KBM-7 (cell line): ENCODE measurements at regions of chr1 and their contacts with region 1.

Region 1: DNA sequence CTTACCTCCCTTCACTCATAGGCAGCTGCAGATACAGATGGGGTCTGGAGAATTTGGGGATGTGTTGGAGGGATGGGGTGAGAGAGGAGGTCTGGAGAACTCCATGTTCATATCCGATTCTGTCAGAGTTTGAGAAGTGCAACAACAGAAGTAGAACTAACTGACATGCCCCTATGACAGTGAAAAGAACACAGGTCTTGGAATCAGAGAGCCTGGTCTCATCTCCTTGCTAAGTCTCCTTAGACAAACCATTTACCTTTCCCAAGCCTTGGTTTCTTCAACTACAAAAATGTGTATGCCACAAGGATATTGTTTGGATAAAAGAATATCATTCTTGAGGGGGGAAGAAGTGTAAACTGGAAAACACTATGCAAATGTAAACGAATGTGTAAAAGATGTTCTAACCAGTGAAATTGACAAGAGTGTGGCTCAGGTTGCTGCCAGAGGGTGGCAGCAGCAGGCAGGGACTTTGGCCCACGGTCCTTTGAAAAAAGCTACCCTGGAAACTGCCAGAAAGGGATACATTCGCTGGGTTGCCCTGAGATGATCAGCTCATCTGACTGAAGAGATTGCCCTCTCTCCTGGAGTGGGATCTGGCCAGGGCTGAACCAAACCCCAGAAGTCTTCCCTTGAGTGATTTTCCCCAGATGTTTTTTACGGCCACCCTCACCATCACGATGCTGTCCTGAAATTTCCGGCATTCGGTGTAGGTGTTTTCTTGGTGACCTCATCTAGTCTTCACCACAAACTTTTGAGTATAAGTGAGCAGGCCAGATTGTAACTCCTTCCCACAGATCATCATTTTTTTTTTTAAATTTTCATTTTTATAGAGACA is 17.0 kb upstream of the CD2 start:
- DNase-seq: peak; percentile 78

Region 2: GRCh38 chr1:116826818-116827606 is 89.8 kb after region 1 on chr1:
- in situ Hi-C with region 1: loop called (anchors 10 kb)
- DNase-seq: peak; percentile 84

Region 3: DNA sequence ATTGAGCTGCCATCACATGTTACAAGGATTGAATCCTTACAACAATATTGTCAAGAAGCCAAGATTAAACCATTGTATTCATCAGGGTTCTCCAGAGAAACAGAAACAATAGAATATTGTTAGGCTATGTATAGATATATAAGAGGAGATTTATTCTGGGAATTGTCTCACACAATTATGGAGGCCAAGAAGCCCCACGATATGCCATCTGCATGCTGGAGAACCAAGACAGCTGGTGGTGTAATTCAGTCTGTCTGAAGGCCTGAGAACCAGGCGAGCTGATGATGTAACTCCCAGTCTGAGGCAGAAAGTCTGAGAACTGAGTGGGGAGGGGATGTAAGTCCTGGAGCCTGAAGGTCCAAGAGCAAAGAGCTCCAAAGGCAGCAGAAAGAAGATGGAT is 308.4 kb after region 1 on chr1:
- in situ Hi-C with region 1: loop called (anchors 25 kb)
- DNase-seq: no peak